HAP-1 (cell line): ENCODE measurements at regions of chr16 and their contacts with region 1.

Region 1: GRCh38 chr16:50210266-50211038 is 55.9 kb upstream of the ADCY7 start:
- DNase-seq: peak; percentile 84 to 86
- H3K4me3 ChIP-seq: no peak overlapping the region
- H3K4me1 ChIP-seq: peaks cover 21% of the 10 kb centered on the region
- H3K27me3 ChIP-seq: no peaks in the 10 kb centered on the region

Region 2: DNA sequence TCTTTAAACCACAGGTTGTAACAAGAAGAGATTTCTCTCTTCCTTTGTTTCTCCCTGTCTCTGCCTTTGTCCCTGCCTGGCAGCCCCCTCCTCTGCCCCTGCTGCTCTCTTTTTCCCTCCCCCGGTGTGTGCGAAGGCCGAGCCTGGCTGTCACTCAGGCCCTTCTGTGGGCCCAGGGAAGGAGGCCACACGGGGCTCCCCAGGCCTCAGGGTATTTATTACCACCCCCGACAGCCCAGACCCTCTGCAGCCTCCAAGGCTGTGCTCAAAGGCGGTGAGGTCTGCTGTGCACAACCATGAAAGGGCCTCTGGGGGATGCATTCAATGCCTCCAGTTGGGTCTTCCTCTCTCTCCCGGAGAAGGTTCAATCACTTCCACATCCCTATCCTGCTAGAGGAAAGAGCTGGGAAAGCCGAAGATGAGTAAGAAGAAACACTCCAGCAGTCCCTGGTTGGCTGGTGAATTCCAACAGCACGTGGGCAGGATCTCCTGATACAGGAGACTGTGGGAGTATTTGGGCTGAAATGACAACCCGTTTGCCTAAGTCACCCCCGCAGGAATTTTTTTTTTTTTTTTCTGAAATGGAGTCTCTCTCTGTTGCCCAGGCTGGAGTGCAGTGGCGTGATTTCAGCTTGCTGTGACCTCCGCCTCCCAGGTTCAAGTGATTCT is 388.7 kb before region 1 on chr16:
- in situ Hi-C with region 1: no loop called
- DNase-seq: no peak
- H3K4me3 ChIP-seq: no peak overlapping the region
- H3K4me1 ChIP-seq: no peaks in the 10 kb centered on the region
- H3K27me3 ChIP-seq: no peaks in the 10 kb centered on the region; the same call in 1 of the 2 replicates

Region 3: DNA sequence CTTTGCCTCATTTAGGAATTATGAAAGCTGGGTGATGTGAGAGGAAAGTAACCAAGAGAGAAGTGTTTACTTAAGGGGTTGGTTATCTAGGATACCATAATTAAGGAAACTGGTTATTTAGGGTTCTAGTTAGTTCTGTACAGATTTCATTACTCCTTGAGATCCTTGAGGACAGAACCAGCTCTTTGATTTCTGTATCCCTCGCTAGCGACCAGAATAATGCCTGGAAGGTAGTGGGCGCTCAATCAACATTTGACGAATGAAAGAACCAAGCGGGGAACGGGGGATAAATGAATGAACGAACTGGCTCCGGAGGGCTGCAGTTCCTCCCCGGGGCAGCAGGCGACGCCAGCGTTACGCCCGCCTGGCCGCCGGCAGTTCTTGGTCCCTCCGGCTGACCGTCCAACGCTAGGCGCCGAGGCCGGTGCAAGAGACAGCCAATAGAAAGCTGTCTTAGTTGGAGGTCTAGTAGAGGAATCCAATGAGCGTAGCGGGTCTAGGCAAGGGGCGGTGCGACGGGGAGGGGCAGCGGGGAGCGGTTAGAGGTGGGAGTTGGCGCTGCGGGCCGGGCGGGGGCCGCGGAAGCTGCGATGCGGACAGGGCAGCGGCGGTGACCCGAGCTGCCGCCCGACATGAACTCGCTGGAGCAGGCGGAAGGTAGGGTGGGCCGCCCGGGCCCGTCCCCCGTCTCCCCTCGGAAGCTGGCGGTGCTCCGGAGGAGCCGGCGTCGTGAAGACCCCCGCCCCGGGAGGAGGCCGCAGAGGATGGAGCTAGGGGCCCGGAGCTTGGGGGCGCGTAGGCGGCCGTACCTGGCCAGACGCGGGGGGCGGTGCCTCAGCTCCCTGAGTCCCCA is 185.5 kb before region 1 on chr16 and contains the start of gene CNEP1R1:
- in situ Hi-C with region 1: loop called (anchors 10 kb)
- DNase-seq: peak; percentile 95 to 96
- H3K4me3 ChIP-seq: peak within 1 kb of the TSS; percentile 96
- H3K4me1 ChIP-seq: peaks cover 8% of the 10 kb centered on the region
- H3K27me3 ChIP-seq: no peaks in the 10 kb centered on the region; the same call in 1 of the 2 replicates

Region 4: GRCh38 chr16:50821586-50821985 is 611.1 kb after region 1 on chr16:
- in situ Hi-C with region 1: no loop called
- DNase-seq: no peak
- H3K4me3 ChIP-seq: no peak overlapping the region
- H3K4me1 ChIP-seq: no peaks in the 10 kb centered on the region
- H3K27me3 ChIP-seq: 0 out of 2 replicates have a peak, but pooled peaks cover 6% of the 10 kb centered on the region